Activated CD4-positive, alpha-beta T cell treated with anti-CD3 and anti-CD28 coated beads, Interleukin-2, amount 10 ng/mL, durations not matched to agents 24 days and 14 days (primary cell): ENCODE measurements at regions of chr5 and their contacts with region 1.

Region 1: GRCh38 chr5:95808686-95809413 is 13.7 kb downstream of the GLRX start:
- DNase-seq: peak; percentile 95
- H3K4me3 Mint-ChIP-seq: peak overlapping the region; percentile 72
- H3K27ac Mint-ChIP-seq: peak overlapping the region; percentile 78
- H3K4me1 Mint-ChIP-seq: peaks cover 52% of the 10 kb centered on the region
- H3K27me3 Mint-ChIP-seq: no peaks in the 10 kb centered on the region

Region 2: DNA sequence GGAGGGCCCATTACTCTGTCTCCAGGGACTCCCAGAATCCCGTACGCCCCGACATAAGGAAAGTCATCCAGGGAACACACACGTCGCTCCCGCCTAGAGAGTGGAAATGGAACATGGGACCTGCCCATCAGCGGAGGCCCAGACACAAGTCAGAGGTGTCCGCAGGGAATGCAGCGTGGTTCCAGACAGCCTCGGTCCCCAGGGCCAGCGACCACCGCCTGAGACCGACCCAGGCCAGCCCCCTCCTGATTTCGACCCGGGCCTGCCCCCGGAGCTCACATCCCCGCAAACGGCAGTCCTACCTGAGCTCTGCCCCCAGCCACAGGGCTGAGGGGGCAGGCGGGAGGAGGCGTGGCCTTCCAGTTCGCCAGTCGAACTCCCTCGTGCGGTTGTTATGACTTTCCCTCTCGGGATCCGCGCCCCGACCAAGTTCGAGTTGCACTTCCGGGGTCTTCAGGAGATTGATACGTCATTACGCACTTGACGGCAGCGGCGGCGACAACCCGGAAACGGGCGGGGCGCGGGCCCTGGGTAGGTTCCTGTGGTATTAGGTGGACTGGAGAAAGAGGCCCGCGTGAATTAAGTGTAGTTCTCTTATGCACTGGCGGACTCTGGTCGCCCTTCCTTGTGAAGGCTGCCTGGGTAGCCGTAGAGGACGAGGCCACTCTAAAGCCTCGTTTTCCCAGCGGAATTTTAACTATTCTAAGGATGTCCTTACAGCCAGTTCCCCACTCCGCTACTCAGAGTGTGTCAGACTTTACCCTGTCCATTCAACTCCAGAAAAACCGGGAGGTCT is 1697.4 kb before region 1 on chr5:
- intact Hi-C with region 1: loop called (anchors 5 kb)
- DNase-seq: peak; percentile 97
- H3K4me3 Mint-ChIP-seq: peak overlapping the region; percentile 95
- H3K27ac Mint-ChIP-seq: peak overlapping the region; percentile 91
- H3K4me1 Mint-ChIP-seq: peaks cover 16% of the 10 kb centered on the region
- H3K27me3 Mint-ChIP-seq: peaks cover 5% of the 10 kb centered on the region

Region 3: DNA sequence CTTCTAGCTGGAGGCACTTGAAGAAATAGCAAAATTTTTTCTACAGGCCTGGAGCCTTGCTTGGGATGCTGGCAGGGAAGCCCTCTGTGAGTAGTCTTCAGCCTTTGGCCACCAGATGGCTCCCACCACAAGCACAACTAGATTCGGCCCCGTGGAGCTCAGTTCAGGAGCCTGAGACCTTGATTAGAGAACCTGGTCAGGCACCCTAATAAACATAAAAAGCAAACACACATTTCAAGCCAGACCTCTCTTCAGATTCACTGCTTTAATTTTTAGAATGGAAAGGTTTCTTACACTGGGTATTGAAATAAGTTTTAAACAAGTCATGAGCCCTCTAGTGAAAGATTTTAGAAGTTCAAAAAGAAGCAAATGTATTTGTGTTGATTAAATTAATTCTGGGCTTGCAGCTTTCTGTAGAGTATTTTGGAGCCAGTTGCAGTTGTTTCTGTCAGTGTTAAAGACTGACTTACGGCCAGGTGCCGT is 27.7 kb before region 1 on chr5:
- intact Hi-C with region 1: loop called (anchors 2 kb)
- DNase-seq: peak; percentile 90
- H3K4me3 Mint-ChIP-seq: peak overlapping the region; percentile 56
- H3K27ac Mint-ChIP-seq: no peak overlapping the region
- H3K4me1 Mint-ChIP-seq: peaks cover 16% of the 10 kb centered on the region
- H3K27me3 Mint-ChIP-seq: peaks cover 7% of the 10 kb centered on the region

Region 4: DNA sequence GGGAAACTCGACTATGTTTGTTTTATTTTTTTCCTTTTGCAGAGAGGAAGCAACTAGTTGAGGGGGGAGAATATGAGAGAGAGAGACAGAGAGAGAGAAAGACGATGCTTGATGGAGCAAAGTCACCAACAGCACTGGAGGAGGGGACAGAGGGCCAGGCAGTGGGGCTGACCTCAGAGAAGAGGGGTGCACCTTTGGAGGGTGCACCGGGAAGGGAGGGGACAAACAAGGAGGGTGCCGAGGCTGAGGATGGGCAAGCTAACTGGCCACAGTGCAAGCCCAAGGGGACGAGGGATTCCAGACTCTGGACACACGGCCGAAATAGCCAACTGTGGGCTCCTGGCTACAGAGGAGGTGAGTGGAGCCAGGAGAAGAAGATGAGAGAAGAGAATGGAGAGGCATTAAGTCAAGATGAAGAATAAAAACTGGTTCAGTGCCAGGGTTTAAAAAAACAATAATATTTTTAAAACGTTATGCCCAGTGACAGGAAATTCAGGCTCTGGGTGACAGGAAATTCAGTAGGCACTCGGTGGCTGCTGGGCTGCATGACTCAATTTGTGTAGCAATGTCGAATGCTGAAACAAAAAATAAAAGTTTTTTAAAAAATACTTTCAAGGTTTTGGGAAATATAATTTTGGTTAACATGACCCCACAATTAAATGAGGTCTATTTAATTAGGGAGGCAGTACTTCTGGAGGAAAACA is 27.0 kb after region 1 on chr5:
- intact Hi-C with region 1: loop called (anchors 1 kb)
- DNase-seq: no peak
- H3K4me3 Mint-ChIP-seq: peak overlapping the region; percentile 78
- H3K27ac Mint-ChIP-seq: peak overlapping the region; percentile 74
- H3K4me1 Mint-ChIP-seq: peaks cover 31% of the 10 kb centered on the region
- H3K27me3 Mint-ChIP-seq: no peaks in the 10 kb centered on the region

Region 5: DNA sequence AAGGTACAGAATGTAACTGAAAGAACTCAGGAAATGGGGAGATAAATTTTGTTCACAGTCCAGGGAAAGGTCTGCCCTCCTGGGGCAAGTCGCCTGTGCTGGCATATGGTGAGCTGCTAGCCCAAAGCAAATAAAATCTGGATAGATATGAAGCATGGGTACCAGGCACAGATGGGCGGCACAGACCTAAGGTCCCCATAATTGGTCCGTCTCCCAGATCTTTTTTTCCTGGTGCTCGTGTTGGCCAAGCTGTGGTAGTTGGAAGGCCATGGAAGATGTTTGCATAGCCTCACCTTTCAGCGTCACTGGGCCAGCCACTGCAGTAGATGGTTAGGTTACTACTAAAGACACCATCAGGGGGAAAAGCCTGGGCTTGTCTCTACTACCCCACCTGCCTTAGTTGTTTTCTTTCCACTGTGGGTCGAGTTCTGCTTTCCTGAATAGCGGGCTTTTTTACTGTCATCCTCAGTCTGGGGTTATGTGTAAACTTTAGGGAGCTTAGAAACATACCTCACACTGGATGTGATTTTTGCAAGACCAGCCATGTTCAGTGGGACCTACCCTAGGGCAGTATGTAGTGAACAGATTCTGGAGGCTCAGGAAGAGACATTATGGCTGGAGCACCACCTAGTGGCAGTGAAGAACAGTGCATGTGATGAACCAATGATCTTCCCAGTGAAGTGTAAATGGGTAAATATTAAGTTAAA is 37.9 kb after region 1 on chr5:
- intact Hi-C with region 1: loop called (anchors 2 kb)
- DNase-seq: peak; percentile 90
- H3K4me3 Mint-ChIP-seq: no peak overlapping the region
- H3K27ac Mint-ChIP-seq: no peak overlapping the region
- H3K4me1 Mint-ChIP-seq: peaks cover 27% of the 10 kb centered on the region
- H3K27me3 Mint-ChIP-seq: peaks cover 16% of the 10 kb centered on the region